ENCODE measurements at regions of chr2 and their contacts with region 1.

Region 1: DNA sequence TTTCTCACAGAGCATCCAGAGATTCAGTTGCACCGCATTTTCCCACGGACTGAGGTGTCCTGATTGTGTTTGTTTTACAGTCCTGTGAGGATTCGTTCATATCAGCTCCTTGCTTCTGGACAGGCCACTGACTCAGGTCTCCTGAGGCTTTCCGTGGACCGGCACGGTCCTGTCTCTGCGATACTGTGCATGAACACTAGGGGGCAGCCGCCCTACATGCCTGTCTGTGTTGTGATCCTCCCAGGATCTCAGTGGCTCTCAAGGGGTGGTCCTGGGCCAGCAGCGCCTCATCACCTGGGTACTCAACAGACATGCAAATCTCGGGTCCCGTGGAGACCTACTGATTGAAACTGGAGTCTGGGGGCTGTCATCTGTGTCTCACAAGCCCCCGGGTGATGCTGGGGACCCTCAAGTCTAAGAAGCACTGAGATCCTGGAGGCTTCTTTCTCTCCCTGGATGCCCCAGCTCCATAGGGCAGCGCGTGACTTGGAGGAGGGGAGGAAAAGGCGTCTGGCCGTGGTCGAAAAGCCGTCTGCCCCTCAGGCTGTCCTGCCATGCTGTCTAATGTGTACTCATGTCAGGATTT is 28.9 kb downstream of the IL1R2 start:
- DNase-seq: peak; percentile 96

Region 2: GRCh38 chr2:101949304-101949703 is 71.4 kb before region 1 on chr2:
- intact Hi-C with region 1: no loop called
- DNase-seq: no peak

Region 3: GRCh38 chr2:102041351-102041750 is 20.7 kb after region 1 on chr2:
- intact Hi-C with region 1: no loop called
- DNase-seq: no peak

Region 4: GRCh38 chr2:102063941-102064678 is 43.4 kb after region 1 on chr2:
- intact Hi-C with region 1: loop called in 1 of 2 experiments (anchors 5 kb)
- DNase-seq: peak; percentile 97

Region 5: DNA sequence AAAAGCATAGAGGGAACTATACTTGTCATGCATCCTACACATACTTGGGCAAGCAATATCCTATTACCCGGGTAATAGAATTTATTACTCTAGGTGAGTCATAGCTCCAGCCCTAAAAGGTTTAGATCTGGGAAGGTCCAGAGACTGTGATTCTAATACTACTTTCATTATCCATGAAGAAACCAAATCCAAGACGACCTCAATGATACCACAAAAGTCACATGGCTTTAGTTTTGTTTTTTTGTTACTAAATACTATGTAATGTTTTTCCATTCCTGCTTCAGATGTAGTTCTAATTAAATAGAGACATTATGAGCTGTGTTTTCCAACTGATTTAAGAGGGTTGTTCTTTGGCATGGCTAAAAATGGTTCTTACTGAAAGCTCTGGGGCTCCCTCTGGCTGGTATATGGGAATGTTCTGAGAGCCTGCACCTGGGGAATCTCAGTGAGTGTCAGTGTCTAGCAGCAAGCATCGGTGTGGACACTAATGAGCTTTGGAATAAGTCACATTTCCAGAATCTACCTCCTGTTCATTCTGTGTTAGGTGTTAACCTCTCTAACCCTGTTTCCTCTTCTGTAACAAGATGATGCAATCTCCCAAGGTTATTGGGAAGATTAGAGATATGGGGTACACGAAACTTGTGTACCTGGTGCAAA is 145.6 kb after region 1 on chr2:
- intact Hi-C with region 1: loop called (anchors 5 to 10 kb)
- DNase-seq: no peak

Measured in posterior vena cava (tissue), 2 donors.